IMR-90 (cell line): ENCODE measurements at regions of chr22 and their contacts with region 1.

Region 1: DNA sequence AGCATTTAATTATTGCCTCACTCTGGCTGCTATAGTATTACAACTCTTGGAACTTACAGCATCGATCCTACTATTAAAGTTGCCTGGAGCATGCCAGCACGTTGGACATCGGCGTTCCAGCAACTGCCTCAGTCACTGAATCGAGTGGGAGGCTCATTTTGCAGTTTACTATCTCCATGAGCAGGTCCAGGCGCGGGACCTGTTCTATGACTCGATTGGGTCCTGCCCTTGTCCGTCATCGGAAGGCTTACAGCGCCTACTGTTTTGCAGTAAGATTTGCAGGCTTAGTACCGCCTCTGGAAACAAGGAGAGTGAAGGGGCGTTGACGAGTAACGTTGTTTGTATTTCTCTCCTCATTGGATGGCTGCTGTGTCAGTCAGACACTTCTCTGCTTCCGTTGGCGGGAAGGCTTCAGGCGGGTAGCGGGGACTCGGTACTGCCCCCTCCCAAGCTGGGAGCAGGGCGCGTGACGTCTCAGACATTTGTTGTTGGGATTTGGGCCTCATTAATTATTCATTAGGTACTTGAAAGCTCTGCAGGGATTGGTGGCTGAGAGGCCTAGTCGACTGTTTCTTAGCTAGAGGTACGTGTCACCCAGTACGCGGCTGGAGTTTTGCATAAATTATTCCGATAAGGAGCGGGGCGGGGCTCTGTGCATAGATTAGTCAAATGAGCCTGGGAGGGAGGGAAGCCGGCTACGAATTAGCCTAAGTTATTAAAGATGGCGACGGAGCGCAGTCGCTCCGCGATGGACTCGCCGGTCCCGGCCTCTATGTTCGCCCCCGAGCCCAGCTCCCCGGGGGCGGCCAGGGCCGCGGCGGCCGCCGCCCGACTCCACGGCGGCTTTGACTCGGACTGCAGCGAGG is at the start of gene GTPBP1:
- DNase-seq: peak; percentile 100
- ATAC-seq: peak; percentile 87
- H3K4me3 ChIP-seq: peak within 1 kb of the TSS; percentile 69
- H3K27ac ChIP-seq: peak within 1 kb of the TSS; percentile 72
- H3K4me1 ChIP-seq: peaks cover 8% of the 10 kb centered on the region
- H3K27me3 ChIP-seq: no peaks in the 10 kb centered on the region
- CTCF ChIP-seq: peak; percentile 13; the same call in 1 of the 2 replicates
- POLR2A ChIP-seq: peak; percentile 91
- RAD21 ChIP-seq: no peak
- total RNA-seq, gene GTPBP1: 12.4 and 21.4 TPM in 2 replicates

Region 2: GRCh38 chr22:38051900-38052862 is 653.3 kb before region 1 on chr22:
- CTCF ChIA-PET with region 1: no interaction called
- POLR2A ChIA-PET with region 1: no interaction called
- dilution Hi-C with region 1: no loop called
- in situ Hi-C with region 1: no loop called
- intact Hi-C with region 1: loop called (anchors 10 kb)
- DNase-seq: peak; percentile 65
- ATAC-seq: peak; percentile 83
- H3K4me3 ChIP-seq: no peak overlapping the region
- H3K27ac ChIP-seq: no peak overlapping the region
- H3K4me1 ChIP-seq: peaks cover 3% of the 10 kb centered on the region; the same call in 1 of the 2 replicates
- H3K27me3 ChIP-seq: peaks cover 5% of the 10 kb centered on the region; the same call in 1 of the 2 replicates
- CTCF ChIP-seq: peak; percentile 85
- POLR2A ChIP-seq: no peak
- RAD21 ChIP-seq: peak; percentile 89

Region 3: DNA sequence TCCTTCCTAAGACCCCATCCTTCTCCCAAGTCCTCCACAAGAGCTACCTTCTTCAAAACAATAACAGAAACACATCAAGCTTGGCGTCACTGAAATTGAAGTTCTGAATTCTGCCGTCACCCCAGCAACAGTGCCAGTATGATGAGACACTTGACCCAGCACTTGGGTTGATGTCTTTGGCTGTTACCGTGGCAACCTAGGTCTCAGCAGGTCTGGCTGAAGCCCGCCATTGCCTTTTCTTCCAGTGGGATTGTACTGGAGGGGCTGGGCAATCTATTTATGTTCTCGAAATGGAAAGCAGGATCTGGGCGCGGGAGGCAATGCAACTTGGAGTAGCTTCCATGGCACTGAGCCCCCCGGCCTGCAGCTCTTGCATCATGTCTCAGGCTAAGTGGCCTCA is 114.6 kb after region 1 on chr22:
- CTCF ChIA-PET with region 1: no interaction called
- POLR2A ChIA-PET with region 1: no interaction called
- dilution Hi-C with region 1: no loop called
- in situ Hi-C with region 1: no loop called
- intact Hi-C with region 1: no loop called
- DNase-seq: no peak
- ATAC-seq: no peak
- H3K4me3 ChIP-seq: no peak overlapping the region
- H3K27ac ChIP-seq: no peak overlapping the region
- H3K4me1 ChIP-seq: no peaks in the 10 kb centered on the region
- H3K27me3 ChIP-seq: peaks cover 39% of the 10 kb centered on the region
- CTCF ChIP-seq: no peak
- POLR2A ChIP-seq: no peak
- RAD21 ChIP-seq: no peak

Region 4: DNA sequence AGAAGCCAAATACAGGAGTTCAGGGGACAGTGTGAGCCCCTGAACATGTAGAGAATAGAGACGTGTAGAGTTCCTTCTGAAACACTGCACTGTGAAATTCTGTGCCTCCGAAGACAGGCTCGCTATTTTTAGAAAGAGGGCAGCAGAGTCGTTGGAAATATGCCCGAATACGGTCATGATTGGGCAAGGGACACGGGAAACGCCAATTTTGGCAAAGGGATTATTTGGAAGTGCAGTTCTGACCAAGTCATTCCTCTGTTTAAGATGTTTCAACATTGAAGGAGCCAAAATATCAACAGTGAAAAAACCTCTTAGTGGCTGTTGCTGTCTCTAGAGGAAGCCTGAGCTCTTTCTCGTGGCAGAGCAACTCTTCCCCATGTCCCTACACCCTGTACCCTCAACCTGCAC is 176.0 kb after region 1 on chr22:
- CTCF ChIA-PET with region 1: no interaction called
- POLR2A ChIA-PET with region 1: no interaction called
- dilution Hi-C with region 1: no loop called
- in situ Hi-C with region 1: no loop called
- intact Hi-C with region 1: no loop called
- DNase-seq: peak; percentile 81
- ATAC-seq: peak; percentile 87
- H3K4me3 ChIP-seq: no peak overlapping the region
- H3K27ac ChIP-seq: peak overlapping the region; percentile 85
- H3K4me1 ChIP-seq: peaks cover 14% of the 10 kb centered on the region
- H3K27me3 ChIP-seq: no peaks in the 10 kb centered on the region; the same call in 1 of the 2 replicates
- CTCF ChIP-seq: no peak
- POLR2A ChIP-seq: no peak
- RAD21 ChIP-seq: no peak

Region 5: GRCh38 chr22:38941488-38941987 is 236.1 kb after region 1 on chr22:
- CTCF ChIA-PET with region 1: no interaction called
- POLR2A ChIA-PET with region 1: no interaction called
- dilution Hi-C with region 1: no loop called
- in situ Hi-C with region 1: no loop called
- intact Hi-C with region 1: no loop called
- DNase-seq: no peak
- ATAC-seq: no peak
- H3K4me3 ChIP-seq: no peak overlapping the region
- H3K27ac ChIP-seq: no peak overlapping the region
- H3K4me1 ChIP-seq: no peaks in the 10 kb centered on the region
- H3K27me3 ChIP-seq: peaks cover 62% of the 10 kb centered on the region
- CTCF ChIP-seq: no peak
- POLR2A ChIP-seq: no peak
- RAD21 ChIP-seq: no peak